OCI-LY7 (cell line): ENCODE measurements at regions of chr1 and their contacts with region 1.

Region 1: GRCh38 chr1:6475381-6476133 is 9.6 kb upstream of the TNFRSF25 start:
- DNase-seq: peak; percentile 67
- H3K4me3 ChIP-seq: no peak overlapping the region
- H3K27ac ChIP-seq: no peak overlapping the region
- H3K4me1 ChIP-seq: no peaks in the 10 kb centered on the region
- CTCF ChIP-seq: peak; percentile 91

Region 2: GRCh38 chr1:5198328-5198727 is 1277.2 kb before region 1 on chr1:
- CTCF ChIA-PET with region 1: no interaction called
- POLR2A ChIA-PET with region 1: no interaction called
- intact Hi-C with region 1: no loop called
- DNase-seq: no peak
- H3K4me3 ChIP-seq: no peak overlapping the region
- H3K27ac ChIP-seq: no peak overlapping the region
- H3K4me1 ChIP-seq: no peaks in the 10 kb centered on the region
- CTCF ChIP-seq: no peak

Region 3: DNA sequence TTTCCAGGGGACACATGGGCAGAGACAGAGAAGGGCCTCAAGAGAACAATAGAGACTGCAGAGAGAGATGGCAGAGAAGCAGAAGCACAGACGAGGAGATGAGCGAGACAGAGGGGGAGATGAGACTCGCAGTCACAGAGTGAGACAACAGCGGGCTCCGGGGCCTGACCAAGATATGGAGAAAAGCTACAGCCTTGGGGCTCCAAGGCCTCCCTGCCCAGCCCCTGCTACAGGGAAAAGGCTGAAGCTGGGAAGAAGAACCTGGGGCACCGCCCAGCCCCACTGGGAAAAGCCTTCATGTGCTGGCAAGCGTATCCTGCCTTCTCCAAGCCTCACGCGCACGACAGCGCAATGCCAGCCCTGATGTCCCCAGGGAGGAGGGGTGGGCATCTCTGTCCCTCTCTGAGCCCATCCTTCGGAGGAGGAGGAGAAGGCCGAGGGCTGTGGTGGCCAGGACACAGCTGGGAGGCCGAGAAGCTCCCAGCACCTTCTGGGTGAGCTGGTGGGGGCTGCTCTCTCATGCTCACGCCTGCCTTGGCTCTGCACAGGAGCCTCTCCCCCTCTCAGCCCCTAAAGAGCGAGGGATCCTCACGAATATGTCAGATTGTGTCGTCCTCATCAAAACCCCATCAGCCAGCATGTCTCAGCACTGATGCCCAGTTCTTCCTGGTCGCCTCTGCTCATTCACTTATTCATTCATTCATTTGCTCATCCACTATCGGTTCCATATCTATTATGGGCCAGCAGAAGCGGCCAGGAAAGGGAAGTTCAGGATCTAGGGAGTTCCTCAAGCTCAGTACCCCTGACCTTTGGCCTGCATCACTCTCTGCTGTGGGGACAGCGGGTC is 138.6 kb before region 1 on chr1:
- CTCF ChIA-PET with region 1: no interaction called
- POLR2A ChIA-PET with region 1: interaction called, 11 read pairs
- intact Hi-C with region 1: no loop called
- DNase-seq: no peak
- H3K4me3 ChIP-seq: no peak overlapping the region
- H3K27ac ChIP-seq: no peak overlapping the region
- H3K4me1 ChIP-seq: no peaks in the 10 kb centered on the region
- CTCF ChIP-seq: no peak